Posterior cingulate gyrus (tissue), 11 donors: ENCODE measurements at regions of chr17 and their contacts with region 1.

Region 1: GRCh38 chr17:64975329-64976087 is 56.2 kb upstream of the LRRC37A3 start:
- DNase-seq: peak; percentile 86 to 99 (median 93)

Region 2: DNA sequence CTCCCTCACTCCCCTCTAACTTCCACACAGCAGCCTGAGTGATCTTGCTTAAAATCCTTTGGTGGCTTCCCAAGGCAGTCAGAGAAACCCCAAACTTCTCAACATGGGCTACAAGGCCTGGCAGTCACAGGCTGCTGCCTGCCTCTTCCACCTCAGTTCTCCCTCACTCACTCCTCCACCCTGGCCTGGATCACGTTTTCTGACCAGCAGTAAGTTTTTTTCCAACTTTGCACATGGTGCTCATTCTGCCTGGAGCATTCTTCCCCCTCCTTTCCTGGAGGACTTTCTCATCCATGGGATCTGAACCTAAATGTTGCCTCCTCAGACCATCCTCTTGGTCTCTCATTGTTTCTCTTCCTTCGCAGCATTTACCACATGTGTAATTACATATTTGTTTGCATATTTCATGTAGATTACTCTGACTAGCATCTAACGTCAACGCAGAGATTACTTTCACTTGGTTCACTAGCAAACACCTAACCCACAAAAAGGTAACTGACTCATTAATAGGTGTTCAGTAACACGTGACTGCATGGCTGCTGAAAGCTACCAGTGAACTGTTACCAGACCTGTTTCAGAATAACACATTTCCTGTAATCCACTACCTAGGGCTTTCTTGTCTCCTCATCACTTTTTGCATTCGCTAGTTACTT is 64.0 kb after region 1 on chr17:
- intact Hi-C with region 1: no loop called
- DNase-seq: no peak

Region 3: GRCh38 chr17:65055348-65056261 is 80.1 kb after region 1 on chr17:
- intact Hi-C with region 1: loop called (anchors 1 kb)
- DNase-seq: peak; percentile 58 to 94 (median 62)

Region 4: GRCh38 chr17:65100316-65101140 is 125.0 kb after region 1 on chr17:
- intact Hi-C with region 1: loop called (anchors 5 kb)
- DNase-seq: peak; percentile 75 to 97 (median 84)

Region 5: DNA sequence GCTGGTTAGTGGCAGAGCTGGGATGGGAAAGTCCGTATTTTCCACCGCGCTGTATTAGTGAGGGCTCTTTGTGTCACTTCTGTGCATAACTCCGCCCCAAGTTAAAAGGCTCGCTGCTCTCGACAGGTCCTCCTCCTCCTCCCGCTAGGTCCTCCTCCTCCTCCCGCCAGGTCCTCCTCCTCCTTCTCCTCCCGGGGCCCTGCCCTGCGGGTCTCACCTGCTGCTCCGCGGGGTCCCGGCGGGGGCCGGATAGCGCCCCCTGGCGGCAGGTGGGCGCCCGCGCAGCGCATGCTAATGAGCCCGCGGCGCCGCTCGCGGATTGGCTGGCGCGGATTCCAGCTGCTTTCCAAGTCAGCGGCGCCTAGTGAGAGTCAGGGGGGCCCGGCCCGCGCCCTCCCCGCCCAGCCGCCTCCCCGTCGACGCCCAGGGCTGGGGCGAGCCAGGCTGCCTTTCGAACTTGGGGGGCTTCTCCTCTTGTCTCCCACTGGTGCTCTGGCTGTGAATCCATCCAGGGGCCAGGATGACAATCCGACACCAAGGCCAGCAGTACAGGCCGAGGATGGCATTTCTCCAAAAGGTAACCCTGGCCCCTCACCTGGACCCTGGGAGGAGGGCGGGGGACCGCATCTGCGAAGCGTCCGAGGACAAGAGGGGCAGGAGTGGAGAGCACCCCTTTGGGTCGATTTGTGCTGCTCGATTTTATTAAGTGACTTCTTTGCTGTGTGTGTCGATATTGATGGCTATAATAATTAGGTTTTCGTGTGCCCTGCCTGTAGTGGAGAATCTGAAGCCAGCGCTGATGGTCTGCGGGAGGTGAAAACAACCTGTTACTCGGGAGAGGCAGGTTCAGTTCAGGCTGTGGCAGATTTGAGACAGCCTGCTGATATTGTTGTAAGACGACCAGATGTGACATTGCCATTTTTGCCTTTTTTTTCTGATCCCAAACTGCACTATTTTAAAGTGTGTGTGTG is 161.8 kb after region 1 on chr17 and contains the start of gene RGS9:
- intact Hi-C with region 1: loop called (anchors 10 kb)
- DNase-seq: peak; percentile 47 to 97 (median 78)